AG04449 (cell line): ENCODE measurements at regions of chr3 and their contacts with region 1.

Region 1: GRCh38 chr3:46845791-46846623 is 17.2 kb downstream of the MYL3 start:
- DNase-seq: no peak
- H3K4me3 ChIP-seq: peak overlapping the region; percentile 45
- CTCF ChIP-seq: peak; percentile 67

Region 2: GRCh38 chr3:46378426-46378942 is 467.5 kb before region 1 on chr3:
- CTCF ChIA-PET with region 1: no interaction called
- POLR2A ChIA-PET with region 1: no interaction called
- DNase-seq: no peak
- H3K4me3 ChIP-seq: no peak overlapping the region
- CTCF ChIP-seq: peak; percentile 70

Region 3: DNA sequence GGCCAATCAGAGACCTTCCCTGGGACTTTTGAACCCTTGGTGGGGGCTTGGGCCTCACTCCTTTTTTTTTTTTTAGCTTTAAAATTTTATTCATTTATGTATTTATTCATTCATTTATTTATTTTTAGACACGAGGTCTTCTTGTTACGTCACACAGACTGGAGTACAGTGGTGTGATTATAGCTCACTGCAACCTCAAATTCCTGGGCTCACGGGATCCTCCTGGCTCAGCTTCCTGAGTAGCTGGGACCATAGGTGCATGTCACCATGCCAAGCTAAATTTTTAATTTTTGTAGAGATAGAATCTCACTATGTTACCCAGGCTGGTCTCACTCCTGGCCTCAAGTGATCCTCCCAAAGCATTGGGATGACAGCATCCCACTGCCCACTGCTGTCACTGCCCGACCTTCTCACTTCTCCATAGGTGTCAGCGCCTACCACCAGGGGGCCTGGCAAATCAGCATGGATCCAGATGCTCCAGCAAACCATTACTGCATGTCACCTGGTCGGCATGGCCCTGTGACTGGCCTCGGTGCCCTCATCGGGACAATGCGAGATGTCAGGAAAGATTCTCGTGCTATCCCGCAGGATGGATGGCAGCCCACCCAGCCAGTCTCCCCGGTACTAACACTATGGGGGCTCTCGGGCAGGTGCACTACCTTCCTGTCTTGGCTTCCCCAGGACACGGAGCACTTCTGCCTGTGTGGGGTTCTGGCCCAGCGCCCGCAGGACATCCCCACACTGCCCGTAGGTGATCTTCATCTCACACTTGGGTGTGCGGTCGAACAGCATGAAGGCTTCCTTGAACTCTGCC is 14.2 kb after region 1 on chr3:
- CTCF ChIA-PET with region 1: interaction called, 70 read pairs
- POLR2A ChIA-PET with region 1: no interaction called
- DNase-seq: no peak
- H3K4me3 ChIP-seq: no peak overlapping the region
- CTCF ChIP-seq: peak; percentile 61

Region 4: DNA sequence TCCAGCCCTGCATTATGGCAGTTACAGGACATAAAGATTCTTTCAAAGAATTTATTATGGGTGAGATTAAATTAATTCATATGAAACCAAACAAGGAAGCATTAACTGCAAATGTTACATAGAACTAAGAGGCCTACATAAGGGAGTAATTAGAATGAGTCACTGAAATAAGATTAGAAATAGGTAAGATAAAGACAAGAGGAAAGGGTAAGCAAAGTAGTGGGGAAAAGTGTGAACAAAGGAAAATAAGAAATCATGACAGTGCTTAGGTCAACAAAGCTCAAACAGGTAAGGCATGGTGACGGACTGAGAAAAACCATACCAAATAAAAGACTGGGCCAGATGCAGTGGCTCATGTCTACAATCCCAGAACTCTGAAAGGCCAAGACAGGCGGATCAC is 243.6 kb after region 1 on chr3:
- CTCF ChIA-PET with region 1: no interaction called
- POLR2A ChIA-PET with region 1: no interaction called
- DNase-seq: no peak
- H3K4me3 ChIP-seq: no peak overlapping the region
- CTCF ChIP-seq: no peak